ENCODE measurements at regions of chr2 and their contacts with region 1.

Region 1: DNA sequence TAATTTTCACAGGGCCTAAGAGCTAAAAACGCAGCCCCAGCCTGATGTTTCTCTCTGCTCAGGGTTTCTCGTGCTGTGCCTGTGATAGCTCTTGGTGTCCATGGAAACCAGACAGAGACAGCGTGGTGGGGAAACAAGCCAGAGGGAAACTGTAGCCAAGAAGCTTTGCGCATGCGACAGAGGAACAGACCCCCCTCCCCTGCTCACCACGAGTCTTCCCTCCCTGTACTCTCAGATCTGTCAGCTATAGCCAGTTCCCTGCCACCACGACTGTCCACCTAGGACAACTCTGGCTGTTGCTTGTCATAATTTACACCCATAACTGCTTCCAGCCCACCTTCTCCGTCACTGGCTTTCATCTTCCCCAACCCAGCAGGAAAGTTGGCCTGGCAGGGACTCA is 13.2 kb upstream of the DNAJC27 start:
- DNase-seq: no peak
- ATAC-seq: no peak; the same call in 1 of the 2 replicates
- H3K4me3 ChIP-seq: no peak overlapping the region
- H3K27ac ChIP-seq: no peak overlapping the region
- H3K4me1 ChIP-seq: no peaks in the 10 kb centered on the region
- H3K27me3 ChIP-seq: no peaks in the 10 kb centered on the region
- CTCF ChIP-seq: no peak

Region 2: GRCh38 chr2:24930768-24931167 is 54.1 kb before region 1 on chr2:
- CTCF ChIA-PET with region 1: no interaction called
- POLR2A ChIA-PET with region 1: no interaction called
- in situ Hi-C with region 1: no loop called
- intact Hi-C with region 1: no loop called
- DNase-seq: no peak
- ATAC-seq: no peak
- H3K4me3 ChIP-seq: no peak overlapping the region
- H3K27ac ChIP-seq: no peak overlapping the region
- H3K4me1 ChIP-seq: no peaks in the 10 kb centered on the region
- H3K27me3 ChIP-seq: no peaks in the 10 kb centered on the region
- CTCF ChIP-seq: no peak

Region 3: GRCh38 chr2:25002066-25002465 is 17.2 kb after region 1 on chr2:
- CTCF ChIA-PET with region 1: no interaction called
- POLR2A ChIA-PET with region 1: interaction called, 15 read pairs
- in situ Hi-C with region 1: no loop called
- intact Hi-C with region 1: no loop called
- DNase-seq: no peak
- ATAC-seq: no peak
- H3K4me3 ChIP-seq: no peak overlapping the region
- H3K27ac ChIP-seq: no peak overlapping the region
- H3K4me1 ChIP-seq: no peaks in the 10 kb centered on the region
- H3K27me3 ChIP-seq: no peaks in the 10 kb centered on the region; the same call in 1 of the 2 replicates
- CTCF ChIP-seq: no peak

Region 4: DNA sequence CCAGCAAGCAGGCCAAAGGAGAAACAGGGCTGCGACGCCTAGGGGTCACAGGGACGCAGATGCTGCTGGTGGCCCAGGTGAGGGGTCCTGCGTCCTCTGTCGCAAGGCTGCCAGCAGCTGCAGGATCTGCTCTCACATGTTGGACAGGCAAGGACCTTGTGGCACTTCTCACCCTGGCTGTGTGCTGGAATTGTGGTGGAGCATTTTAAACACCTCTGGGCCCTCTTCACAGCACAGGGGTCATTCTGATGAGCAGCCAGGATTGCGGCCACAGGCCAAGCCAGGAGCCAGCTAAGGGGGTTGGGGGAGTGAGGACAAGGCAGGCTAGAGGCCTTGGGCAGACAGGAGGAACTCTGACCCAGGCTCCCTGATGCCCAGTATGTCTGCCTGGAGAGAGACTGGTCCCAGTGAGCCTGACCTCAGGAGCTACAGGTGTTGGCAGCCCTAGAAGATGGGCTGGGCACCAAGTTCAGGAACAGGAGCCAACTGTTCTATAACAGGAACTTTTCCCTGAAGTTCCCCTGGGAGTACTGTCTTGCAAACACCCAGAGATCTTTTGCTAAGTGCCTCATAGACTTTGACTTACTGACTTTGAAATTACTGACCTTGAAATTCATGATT is 97.2 kb after region 1 on chr2:
- CTCF ChIA-PET with region 1: interaction called, 10 read pairs
- POLR2A ChIA-PET with region 1: no interaction called
- in situ Hi-C with region 1: no loop called
- intact Hi-C with region 1: no loop called
- DNase-seq: no peak
- ATAC-seq: no peak
- H3K4me3 ChIP-seq: no peak overlapping the region
- H3K27ac ChIP-seq: no peak overlapping the region
- H3K4me1 ChIP-seq: peaks cover 15% of the 10 kb centered on the region
- H3K27me3 ChIP-seq: no peaks in the 10 kb centered on the region
- CTCF ChIP-seq: no peak